CD4-positive, alpha-beta memory T cell (primary cell): ENCODE measurements at regions of chr2 and their contacts with region 1.

Region 1: DNA sequence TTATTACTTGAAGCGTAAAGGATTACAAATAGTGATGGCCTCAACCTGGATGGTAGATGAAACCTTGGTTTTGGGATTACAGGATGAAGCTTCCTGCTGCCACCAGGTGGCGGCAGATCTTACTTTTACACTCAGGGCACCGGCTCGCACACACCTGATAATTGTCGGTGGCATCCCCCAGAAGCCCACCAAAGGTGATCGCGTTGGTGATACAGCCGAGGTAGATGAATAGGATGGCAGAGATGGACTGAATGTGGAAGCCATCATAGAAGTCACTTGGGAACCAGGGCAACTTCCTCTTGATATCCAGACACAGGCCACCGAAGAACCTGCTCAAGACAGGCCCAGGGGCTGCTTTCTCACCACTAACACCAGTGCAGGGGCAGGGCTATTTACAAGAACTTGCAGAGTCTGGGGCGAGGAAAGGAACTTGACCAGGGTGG is 51.8 kb downstream of the MTHFD2 start:
- DNase-seq: peak in 4 of 5 donors; percentile 53 to 59 (median 57)
- H3K4me3 ChIP-seq: no peak overlapping the region
- H3K4me3 Mint-ChIP-seq: peak overlapping the region in 1 of 8 donors; percentile 55
- H3K27ac ChIP-seq: no peak overlapping the region
- H3K27ac Mint-ChIP-seq: peak overlapping the region in 3 of 7 donors; percentile 55 to 84 (median 84)
- H3K4me1 ChIP-seq: peaks cover 4% of the 10 kb centered on the region
- H3K4me1 Mint-ChIP-seq: peaks cover 4 to 8% (median 6%) of the 10 kb centered on the region in 4 donors
- H3K27me3 ChIP-seq: no peaks in the 10 kb centered on the region
- H3K27me3 Mint-ChIP-seq: no peaks in the 10 kb centered on the region

Region 2: DNA sequence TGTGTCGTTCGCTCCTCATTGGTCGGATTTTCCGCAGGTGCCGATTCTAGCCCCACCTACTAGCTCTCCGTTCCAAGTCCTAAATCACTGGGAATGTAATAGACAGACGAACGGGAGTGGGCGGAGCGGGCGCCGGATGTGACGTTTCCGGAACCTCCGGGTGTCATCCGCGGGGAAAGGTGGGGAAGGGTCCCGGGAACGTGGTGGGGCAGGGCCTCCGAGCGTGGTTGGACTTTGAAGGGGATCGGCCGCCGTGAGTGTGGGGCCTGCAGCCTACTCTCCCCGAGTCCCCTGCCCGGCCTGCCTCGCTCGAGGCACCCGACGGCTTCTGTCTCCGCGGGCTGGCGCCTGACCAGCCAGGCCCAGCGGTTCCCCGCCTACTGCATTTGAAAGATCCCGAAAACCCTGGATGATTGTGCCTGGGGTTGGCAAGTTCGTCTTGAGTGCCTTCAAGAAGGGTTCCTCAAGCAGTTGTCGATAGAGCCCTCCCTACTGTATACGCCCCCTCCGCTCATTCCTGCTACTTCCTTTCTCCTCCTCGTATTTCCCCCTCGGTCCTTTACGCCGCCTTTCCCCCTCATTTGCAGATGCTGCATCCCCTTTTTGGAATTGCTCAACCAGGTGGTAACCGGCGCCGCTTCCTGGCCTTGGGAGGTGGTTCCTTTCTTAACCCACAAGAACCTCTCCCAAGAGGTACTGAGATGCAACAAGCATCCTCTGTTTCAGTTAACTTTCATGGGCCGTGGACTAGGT is 421.2 kb before region 1 on chr2 and contains the start of gene STAMBP:
- CTCF ChIA-PET with region 1: interaction called, 19 read pairs
- POLR2A ChIA-PET with region 1: no interaction called
- intact Hi-C with region 1: loop called (anchors 10 kb)
- DNase-seq: peak; percentile 87 to 95 (median 91)
- H3K4me3 ChIP-seq: peak within 1 kb of the TSS; percentile 64 to 81
- H3K4me3 Mint-ChIP-seq: peak within 1 kb of the TSS; percentile 91 to 99 (median 96)
- H3K27ac ChIP-seq: peak within 1 kb of the TSS; percentile 92
- H3K27ac Mint-ChIP-seq: peak within 1 kb of the TSS; percentile 94 to 100 (median 98)
- H3K4me1 ChIP-seq: peaks cover 45% of the 10 kb centered on the region
- H3K4me1 Mint-ChIP-seq: peaks cover 34 to 49% (median 40%) of the 10 kb centered on the region in 4 donors
- H3K27me3 ChIP-seq: no peaks in the 10 kb centered on the region
- H3K27me3 Mint-ChIP-seq: no peaks in the 10 kb centered on the region
- total RNA-seq, gene STAMBP: 34.8 to 37.3 TPM

Region 3: DNA sequence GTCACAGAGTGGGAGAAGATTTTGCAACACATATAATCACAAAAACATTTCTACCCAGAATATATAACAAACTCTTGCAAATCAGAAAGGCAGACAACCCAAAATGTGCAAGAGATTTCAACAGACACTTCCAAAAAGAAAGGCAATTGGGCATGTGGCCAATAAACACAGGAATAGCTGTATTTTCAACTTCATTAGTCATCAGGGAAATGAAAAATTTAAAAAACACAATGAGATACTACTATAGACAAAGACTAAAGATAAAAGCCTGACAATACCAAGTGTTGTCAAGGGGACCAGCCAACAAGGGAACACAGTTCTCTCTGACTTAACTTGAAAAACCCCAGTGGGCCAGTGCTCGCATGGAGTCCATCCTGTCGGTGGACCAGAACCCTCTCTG is 11.3 kb before region 1 on chr2:
- CTCF ChIA-PET with region 1: interaction called, 20 read pairs
- POLR2A ChIA-PET with region 1: no interaction called
- intact Hi-C with region 1: no loop called
- DNase-seq: no peak
- H3K4me3 ChIP-seq: no peak overlapping the region
- H3K4me3 Mint-ChIP-seq: no peak overlapping the region
- H3K27ac ChIP-seq: no peak overlapping the region
- H3K27ac Mint-ChIP-seq: no peak overlapping the region
- H3K4me1 ChIP-seq: no peaks in the 10 kb centered on the region
- H3K4me1 Mint-ChIP-seq: peaks cover 0 to 2% (median 0%) of the 10 kb centered on the region in 4 donors
- H3K27me3 ChIP-seq: no peaks in the 10 kb centered on the region
- H3K27me3 Mint-ChIP-seq: no peaks in the 10 kb centered on the region

Region 4: DNA sequence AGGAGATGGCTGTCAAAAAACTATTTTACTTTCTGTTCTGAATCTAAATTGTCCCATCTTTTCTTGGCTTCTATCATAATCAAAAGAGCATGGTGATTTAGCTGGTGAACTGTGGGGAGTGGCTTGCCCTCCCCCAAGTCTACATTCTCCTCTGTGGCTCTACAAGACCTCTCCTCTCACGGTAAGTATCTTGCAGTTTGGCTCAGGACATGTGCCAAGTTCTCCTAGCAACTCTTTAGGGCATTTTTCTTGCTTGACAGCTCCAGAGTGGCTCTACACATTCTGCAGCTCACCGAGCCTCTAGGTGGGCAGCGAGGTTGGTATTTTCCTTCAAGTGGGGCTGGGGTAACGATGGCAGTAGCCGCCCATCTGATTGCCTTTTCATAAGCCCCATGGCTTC is 63.9 kb after region 1 on chr2:
- CTCF ChIA-PET with region 1: no interaction called
- POLR2A ChIA-PET with region 1: no interaction called
- intact Hi-C with region 1: no loop called
- DNase-seq: no peak
- H3K4me3 ChIP-seq: no peak overlapping the region
- H3K4me3 Mint-ChIP-seq: no peak overlapping the region
- H3K27ac ChIP-seq: no peak overlapping the region
- H3K27ac Mint-ChIP-seq: no peak overlapping the region
- H3K4me1 ChIP-seq: no peaks in the 10 kb centered on the region
- H3K4me1 Mint-ChIP-seq: no peaks in the 10 kb centered on the region
- H3K27me3 ChIP-seq: no peaks in the 10 kb centered on the region
- H3K27me3 Mint-ChIP-seq: no peaks in the 10 kb centered on the region

Region 5: DNA sequence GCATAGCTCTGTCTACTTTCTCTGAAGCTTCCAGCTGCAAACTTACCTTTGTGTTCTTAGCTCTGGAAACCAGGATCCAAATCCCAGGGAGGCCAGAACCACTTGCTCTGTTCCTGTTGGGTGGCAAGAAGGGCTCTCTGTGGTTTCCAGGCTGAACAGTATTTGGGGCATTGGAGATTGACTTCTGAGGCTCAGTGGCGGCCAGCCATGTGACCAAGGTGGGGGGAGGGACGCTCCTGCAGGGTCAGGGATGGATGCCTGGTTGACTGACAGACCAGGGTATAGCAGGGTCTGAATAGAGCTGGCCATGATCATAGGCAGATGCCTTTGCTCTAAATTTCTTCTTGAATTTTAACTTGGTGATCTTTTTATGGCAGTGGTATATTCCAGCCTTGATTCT is 77.9 kb after region 1 on chr2:
- CTCF ChIA-PET with region 1: interaction called, 303 read pairs
- POLR2A ChIA-PET with region 1: no interaction called
- intact Hi-C with region 1: no loop called
- DNase-seq: no peak
- H3K4me3 ChIP-seq: no peak overlapping the region
- H3K4me3 Mint-ChIP-seq: no peak overlapping the region
- H3K27ac ChIP-seq: no peak overlapping the region
- H3K27ac Mint-ChIP-seq: peak overlapping the region in 2 of 7 donors; percentile 11 to 29
- H3K4me1 ChIP-seq: peaks cover 3% of the 10 kb centered on the region
- H3K4me1 Mint-ChIP-seq: no peaks in the 10 kb centered on the region
- H3K27me3 ChIP-seq: no peaks in the 10 kb centered on the region
- H3K27me3 Mint-ChIP-seq: no peaks in the 10 kb centered on the region

Region 6: DNA sequence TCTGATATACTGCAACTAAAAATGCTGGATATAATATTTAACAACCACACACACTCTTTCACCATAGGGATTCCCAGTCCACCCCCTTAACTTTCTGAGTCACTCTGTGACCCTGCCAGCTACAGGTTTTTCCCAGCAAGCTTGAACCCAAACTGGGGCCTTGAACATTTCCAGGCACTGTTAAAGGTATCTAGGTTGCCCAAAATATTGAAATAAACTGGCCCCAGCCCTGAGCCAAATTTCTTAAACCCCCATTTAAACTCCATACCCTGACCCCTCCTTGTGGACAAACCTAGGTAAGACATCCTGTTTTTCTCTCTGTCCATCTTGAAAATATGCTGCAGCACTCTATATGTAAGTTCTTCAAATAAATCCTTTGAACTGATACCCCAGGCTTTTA is 149.6 kb after region 1 on chr2:
- CTCF ChIA-PET with region 1: interaction called, 16 read pairs
- POLR2A ChIA-PET with region 1: no interaction called
- intact Hi-C with region 1: loop called (anchors 1 kb)
- DNase-seq: peak in 4 of 5 donors; percentile 36 to 49 (median 41)
- H3K4me3 ChIP-seq: no peak overlapping the region
- H3K4me3 Mint-ChIP-seq: no peak overlapping the region
- H3K27ac ChIP-seq: no peak overlapping the region
- H3K27ac Mint-ChIP-seq: no peak overlapping the region
- H3K4me1 ChIP-seq: no peaks in the 10 kb centered on the region
- H3K4me1 Mint-ChIP-seq: no peaks in the 10 kb centered on the region
- H3K27me3 ChIP-seq: no peaks in the 10 kb centered on the region
- H3K27me3 Mint-ChIP-seq: peaks cover 2 to 4% of the 10 kb centered on the region in 2 donors